WTC11 (cell line): ENCODE measurements at regions of chr3 and their contacts with region 1.

Region 1: DNA sequence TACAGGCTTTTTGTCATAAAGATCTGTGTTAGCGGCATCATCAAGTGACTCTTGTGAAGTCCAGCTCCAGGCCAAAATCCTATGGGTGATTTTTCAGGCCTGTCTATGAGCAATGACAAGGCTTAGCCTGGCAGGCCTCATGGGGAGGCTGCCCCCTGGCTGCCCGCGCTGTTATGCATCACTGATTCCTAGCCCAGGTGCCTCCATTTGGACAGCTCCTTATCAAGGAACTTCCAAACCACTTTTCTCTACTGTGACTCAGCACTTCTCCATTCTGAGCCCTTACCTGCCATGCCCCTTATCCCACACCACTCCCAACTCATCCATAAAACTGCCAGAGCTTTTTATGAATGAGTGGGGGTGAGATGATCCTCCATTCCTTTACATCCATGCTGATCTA is 91.5 kb upstream of the C3orf80 start:
- DNase-seq: peak; percentile 37
- ATAC-seq: peak; percentile 87
- H3K4me3 Mint-ChIP-seq: no peak overlapping the region
- H3K27ac Mint-ChIP-seq: no peak overlapping the region
- H3K4me1 Mint-ChIP-seq: peaks cover 7% of the 10 kb centered on the region; the same call in 1 of the 2 replicates
- H3K27me3 Mint-ChIP-seq: no peaks in the 10 kb centered on the region
- CTCF ChIP-seq: no peak

Region 2: GRCh38 chr3:160027541-160028195 is 106.1 kb before region 1 on chr3:
- CTCF ChIA-PET with region 1: interaction called, 19 read pairs
- POLR2A ChIA-PET with region 1: interaction called, 7 read pairs
- DNase-seq: no peak
- ATAC-seq: no peak
- H3K4me3 Mint-ChIP-seq: no peak overlapping the region
- H3K27ac Mint-ChIP-seq: no peak overlapping the region
- H3K4me1 Mint-ChIP-seq: no peaks in the 10 kb centered on the region
- H3K27me3 Mint-ChIP-seq: peaks cover 2% of the 10 kb centered on the region; the same call in 1 of the 2 replicates
- CTCF ChIP-seq: no peak

Region 3: DNA sequence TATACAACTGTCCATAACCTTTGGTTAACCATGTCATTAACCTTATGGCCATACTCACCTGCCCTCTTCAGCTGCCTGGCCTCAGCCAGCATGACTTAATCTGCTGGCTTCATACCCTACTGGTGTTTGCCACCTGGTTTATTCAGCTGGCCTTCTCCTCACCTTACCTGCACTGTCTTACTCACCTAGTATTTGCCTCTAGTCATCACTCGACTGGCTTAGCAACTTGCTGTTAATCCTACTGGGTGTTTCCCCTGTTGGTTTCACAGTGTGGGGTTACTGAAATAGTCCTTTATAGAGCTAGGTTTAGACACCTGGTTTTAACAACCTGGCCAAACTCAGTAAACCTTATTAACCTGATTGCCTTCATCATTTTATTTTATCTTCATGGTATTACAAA is 48.8 kb before region 1 on chr3:
- CTCF ChIA-PET with region 1: no interaction called
- POLR2A ChIA-PET with region 1: no interaction called
- DNase-seq: no peak
- ATAC-seq: no peak
- H3K4me3 Mint-ChIP-seq: no peak overlapping the region
- H3K27ac Mint-ChIP-seq: no peak overlapping the region
- H3K4me1 Mint-ChIP-seq: no peaks in the 10 kb centered on the region
- H3K27me3 Mint-ChIP-seq: no peaks in the 10 kb centered on the region
- CTCF ChIP-seq: no peak

Region 4: DNA sequence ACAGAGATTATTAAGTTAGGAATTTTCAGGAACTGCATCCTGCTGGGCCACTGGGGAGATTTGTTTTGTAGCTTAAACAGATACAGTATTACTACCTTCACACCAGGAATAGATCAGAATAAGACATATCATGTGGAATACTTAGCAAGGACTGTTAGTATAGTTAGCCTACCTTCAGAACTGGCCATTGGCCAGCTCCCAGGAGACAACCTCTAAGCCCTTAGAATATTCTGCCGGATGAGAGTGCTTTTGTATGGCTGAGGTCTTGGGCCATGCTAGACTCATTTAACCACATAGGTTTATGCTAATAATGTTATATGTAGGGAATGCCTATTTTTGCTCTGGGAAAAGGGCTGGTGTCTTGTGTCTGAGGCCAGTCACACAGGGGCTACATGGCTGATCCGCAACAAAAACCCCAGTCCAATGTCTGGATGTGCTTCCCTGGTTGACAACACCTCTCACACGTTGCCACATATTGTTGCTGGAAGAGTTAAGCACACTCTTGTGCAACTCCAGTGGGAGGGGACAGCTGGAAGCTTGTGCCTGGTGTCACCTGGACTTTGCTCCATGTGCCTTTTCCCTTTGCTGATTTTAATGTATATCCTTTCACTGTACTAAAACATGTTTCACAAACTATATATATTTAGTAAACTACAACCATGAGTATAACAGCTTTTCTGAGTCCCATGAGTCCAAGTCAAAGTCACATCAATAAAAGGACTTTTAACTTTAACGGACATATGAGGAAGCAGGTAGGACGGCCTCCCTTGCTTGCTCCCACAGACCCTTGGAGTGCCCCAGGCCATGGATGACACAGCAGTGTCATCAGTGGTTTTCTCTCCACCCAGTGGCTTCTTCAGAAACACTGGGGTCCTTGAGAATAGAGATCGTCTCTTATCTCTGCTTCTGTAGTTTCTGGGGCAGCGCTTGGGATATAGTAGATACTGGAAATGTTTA is 26.6 kb before region 1 on chr3:
- CTCF ChIA-PET with region 1: no interaction called
- POLR2A ChIA-PET with region 1: no interaction called
- DNase-seq: no peak
- ATAC-seq: no peak; the same call in 1 of the 2 replicates
- H3K4me3 Mint-ChIP-seq: no peak overlapping the region
- H3K27ac Mint-ChIP-seq: no peak overlapping the region
- H3K4me1 Mint-ChIP-seq: 0 out of 2 replicates have a peak, but pooled peaks cover 4% of the 10 kb centered on the region
- H3K27me3 Mint-ChIP-seq: no peaks in the 10 kb centered on the region
- CTCF ChIP-seq: no peak

Region 5: GRCh38 chr3:160163229-160163878 is 29.6 kb after region 1 on chr3:
- CTCF ChIA-PET with region 1: interaction called, 12 read pairs
- POLR2A ChIA-PET with region 1: no interaction called
- DNase-seq: no peak
- ATAC-seq: no peak
- H3K4me3 Mint-ChIP-seq: no peak overlapping the region
- H3K27ac Mint-ChIP-seq: no peak overlapping the region; the same call in 1 of the 2 replicates
- H3K4me1 Mint-ChIP-seq: peaks cover 36% of the 10 kb centered on the region
- H3K27me3 Mint-ChIP-seq: no peaks in the 10 kb centered on the region
- CTCF ChIP-seq: no peak

Region 6: DNA sequence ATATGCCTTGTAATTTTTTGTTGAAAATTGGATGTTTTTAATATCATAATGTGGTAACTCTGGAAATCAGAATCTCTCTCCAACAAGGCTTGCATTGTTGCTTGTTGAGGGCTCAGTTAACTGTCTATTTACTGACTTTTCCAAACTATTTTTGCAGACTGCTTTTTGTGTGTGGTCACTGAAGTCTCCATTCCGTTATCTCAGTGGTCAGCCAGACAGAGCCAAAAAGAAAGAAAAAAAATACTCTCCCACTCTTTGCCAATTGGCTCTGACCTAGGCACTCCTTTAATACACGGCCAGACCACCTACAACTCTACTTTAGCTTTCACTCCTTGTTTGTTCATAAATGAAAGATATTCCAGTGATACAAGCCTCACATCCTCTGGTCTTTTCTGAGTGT is 212.8 kb after region 1 on chr3:
- CTCF ChIA-PET with region 1: no interaction called
- POLR2A ChIA-PET with region 1: no interaction called
- DNase-seq: no peak
- ATAC-seq: no peak
- H3K4me3 Mint-ChIP-seq: no peak overlapping the region
- H3K27ac Mint-ChIP-seq: no peak overlapping the region; the same call in 1 of the 2 replicates
- H3K4me1 Mint-ChIP-seq: no peaks in the 10 kb centered on the region
- H3K27me3 Mint-ChIP-seq: no peaks in the 10 kb centered on the region
- CTCF ChIP-seq: no peak